T-cell (primary cell): ENCODE measurements at regions of chr7 and their contacts with region 1.

Region 1: DNA sequence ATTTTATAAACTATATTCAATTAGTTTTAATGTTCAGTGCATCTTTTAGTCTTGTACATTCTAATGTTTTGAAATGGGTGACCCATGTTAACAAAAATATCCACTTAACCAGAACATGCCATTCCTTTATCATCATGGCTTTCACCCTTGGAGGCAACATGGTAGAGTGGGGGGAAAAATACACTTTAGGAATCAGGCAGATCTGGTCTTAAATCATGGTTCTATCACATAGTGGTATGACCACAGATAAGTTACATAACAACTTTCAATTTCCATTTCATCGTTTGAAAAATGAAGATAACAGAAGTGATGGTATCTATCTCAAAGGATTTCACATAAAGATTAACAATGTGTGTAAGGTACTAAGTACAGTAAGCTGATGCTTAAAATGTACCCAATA is 19.1 kb downstream of the TMEM168 start:
- DNase-seq: no peak
- ATAC-seq: no peak
- H3K4me3 ChIP-seq: no peak overlapping the region
- H3K4me3 Mint-ChIP-seq: no peak overlapping the region
- H3K27ac ChIP-seq: no peak overlapping the region
- H3K27ac Mint-ChIP-seq: no peak overlapping the region
- H3K4me1 ChIP-seq: no peaks in the 10 kb centered on the region
- H3K4me1 Mint-ChIP-seq: peaks cover 6 to 11% (median 10%) of the 10 kb centered on the region in 3 donors
- H3K27me3 ChIP-seq: no peaks in the 10 kb centered on the region
- H3K27me3 Mint-ChIP-seq: no peaks in the 10 kb centered on the region

Region 2: DNA sequence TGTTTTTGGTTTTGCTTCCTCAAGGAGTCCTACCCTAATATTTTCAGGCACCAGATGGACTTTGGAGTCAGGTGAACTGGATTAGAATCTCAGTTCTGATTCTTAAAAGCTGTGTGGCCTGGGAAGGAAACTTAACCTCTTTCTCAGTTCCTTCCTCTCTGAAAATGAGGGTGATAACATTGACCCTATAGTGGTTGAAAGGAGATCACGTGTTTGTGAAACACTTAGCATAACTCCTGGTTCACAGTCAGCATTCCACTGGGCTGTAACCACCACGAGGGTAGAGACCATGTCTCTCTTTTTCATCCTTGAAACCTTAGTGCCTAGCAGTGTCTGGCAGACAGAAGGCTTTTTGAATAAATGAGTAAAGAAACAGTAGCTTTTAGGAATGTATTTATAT is 273.6 kb before region 1 on chr7:
- CTCF ChIA-PET with region 1: no interaction called
- POLR2A ChIA-PET with region 1: interaction called in 1 of 2 experiments, 17 read pairs
- DNase-seq: no peak
- ATAC-seq: no peak
- H3K4me3 ChIP-seq: no peak overlapping the region
- H3K4me3 Mint-ChIP-seq: no peak overlapping the region
- H3K27ac ChIP-seq: no peak overlapping the region
- H3K27ac Mint-ChIP-seq: no peak overlapping the region
- H3K4me1 ChIP-seq: no peaks in the 10 kb centered on the region
- H3K4me1 Mint-ChIP-seq: no peaks in the 10 kb centered on the region
- H3K27me3 ChIP-seq: no peaks in the 10 kb centered on the region
- H3K27me3 Mint-ChIP-seq: peaks cover 6 to 13% of the 10 kb centered on the region in 2 donors